ENCODE measurements at regions of chr12 and their contacts with region 1.

Region 1: DNA sequence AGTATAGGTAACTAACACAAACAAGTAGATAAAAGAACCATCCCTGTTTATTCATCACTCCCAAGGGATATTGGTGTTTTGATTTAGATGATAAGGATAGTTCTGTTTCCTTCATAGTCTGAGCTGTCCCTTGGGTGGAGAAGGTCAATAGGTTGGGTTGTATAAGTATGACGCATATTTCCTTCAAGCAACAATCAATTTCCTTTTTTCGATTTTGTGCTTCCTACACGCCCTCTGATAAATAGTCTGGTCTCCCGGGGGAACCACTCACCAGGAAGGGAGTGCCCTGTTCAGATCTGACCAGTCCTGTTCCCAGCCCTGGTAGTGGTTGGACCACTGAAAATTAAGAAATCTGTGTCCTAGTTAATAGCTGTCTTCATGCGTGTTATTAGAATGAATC is 378.7 kb upstream of the FAR2 start:
- DNase-seq: peak; percentile 76

Region 2: DNA sequence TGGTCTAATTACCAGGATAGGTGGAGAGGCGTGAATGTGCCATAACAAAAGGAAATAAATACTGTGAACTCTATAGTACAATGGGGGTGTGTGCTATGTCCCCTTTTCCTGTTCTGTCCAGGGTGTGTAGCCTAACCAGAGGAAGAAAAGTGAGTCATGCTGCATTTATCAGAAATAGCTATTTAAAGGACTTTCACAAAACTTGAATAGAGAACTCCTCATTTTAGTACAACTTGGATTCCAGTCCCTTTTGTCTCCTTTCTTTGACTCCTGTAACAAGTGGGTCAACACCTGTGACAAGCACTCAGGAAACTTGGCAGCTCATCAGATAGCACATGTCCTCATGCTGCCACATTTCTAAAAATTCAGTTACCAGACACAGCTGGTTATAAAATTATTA is 456.7 kb before region 1 on chr12:
- intact Hi-C with region 1: loop called (anchors 10 kb)
- DNase-seq: no peak

Region 3: DNA sequence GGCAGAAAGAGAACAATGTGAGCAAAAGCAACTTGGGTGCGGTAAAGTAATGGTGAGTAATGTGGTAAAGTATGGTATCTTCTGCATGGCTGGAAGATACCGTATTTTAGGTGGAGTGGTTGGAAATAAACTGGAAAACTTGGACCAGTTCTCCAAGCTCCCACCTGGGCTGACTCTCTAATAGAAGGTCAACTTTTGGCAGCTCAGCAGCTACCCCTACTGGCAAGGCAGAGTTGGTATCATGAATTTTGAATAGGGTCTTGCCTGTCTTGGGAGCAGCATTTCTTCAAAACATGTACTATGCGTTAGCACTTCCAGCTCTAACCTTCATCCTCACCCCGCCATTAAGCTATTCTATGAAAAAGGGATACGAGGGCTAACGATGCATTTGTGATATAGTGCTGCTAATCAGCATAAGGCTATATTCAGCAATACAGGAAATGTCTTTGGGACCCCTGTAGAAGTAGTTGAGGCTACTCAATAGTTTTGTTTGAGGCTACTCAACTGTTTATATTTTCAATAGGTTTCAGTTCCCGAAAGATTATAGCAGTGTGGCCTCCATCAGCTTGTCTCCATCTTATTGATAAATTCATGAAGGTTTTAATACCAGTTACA is 102.4 kb after region 1 on chr12:
- intact Hi-C with region 1: loop called (anchors 5 kb)
- DNase-seq: no peak

Region 4: DNA sequence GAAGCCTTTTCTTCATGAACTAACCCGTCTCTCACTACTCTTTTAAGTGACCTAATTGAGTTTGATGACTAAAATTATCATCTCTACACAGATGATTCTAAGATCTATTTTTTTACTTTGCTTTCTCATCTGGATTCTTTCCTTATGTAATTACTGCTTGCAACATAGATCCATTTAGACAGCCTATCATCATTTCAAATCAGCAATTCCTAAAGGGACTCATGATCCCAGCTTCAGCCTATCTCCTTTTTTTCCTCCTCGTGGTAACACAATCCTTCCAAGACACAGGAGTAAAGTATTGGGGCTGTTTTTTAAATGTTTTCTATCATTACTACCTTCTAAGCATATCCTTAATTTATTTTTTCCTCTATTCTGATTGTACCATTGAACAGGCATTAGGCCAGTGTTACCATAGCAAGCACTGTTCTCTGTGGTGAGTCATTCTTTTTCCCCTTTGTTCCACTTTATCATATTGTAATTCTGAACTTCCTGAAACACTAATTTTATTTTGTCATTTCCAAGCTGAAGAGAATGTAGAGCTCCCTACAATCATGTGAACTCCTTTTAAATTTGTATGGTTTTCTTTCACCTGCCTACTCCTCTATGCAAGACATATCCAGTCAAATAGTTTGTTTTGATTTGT is 188.3 kb after region 1 on chr12:
- intact Hi-C with region 1: loop called (anchors 5 kb)
- DNase-seq: no peak